Lower leg skin (tissue), 4 donors: ENCODE measurements at regions of chrX and their contacts with region 1.

Region 1: DNA sequence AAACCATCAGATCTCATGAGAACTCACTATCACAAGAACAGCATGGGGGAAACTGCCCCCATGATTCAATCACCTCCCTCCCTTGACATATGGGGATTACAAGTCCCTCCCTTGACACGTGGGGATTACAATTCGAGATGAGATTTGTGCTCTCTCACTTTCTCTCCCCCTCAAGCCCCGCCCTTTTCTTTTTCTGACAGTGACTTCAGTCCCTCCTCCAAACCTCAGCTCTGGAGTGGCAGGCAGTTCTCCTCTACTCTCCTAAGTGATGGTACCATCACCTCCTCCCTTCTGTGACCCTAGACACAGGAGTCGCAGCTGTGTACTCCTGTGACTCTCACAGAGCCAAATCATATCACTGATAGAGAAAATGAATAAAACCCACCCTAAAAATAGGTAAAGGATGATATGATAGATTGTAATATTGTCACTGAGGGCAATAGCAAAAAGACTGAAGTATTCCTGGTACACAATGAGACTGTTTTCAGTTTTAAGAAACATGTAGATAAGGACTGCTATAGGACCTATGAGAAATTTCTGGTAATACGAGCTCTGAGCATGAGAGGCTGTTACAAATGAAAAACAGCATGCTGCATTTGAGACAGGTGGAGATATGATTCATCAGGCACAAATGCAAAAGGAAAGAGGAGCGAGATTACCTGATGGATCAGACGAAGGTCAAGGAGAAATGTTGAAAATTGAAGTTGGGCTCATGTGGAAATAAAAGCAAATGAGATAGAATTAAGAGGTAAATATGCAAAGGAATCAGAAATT is 101.2 kb upstream of the CBLL2 start:
- DNase-seq: no peak
- H3K4me3 ChIP-seq: no peak overlapping the region
- CTCF ChIP-seq: no peak
- POLR2A ChIP-seq: no peak

Region 2: GRCh38 chrX:21408307-21408706 is 763.2 kb before region 1 on chrX:
- intact Hi-C with region 1: no loop called
- DNase-seq: no peak
- H3K4me3 ChIP-seq: no peak overlapping the region
- CTCF ChIP-seq: no peak
- POLR2A ChIP-seq: no peak

Region 3: DNA sequence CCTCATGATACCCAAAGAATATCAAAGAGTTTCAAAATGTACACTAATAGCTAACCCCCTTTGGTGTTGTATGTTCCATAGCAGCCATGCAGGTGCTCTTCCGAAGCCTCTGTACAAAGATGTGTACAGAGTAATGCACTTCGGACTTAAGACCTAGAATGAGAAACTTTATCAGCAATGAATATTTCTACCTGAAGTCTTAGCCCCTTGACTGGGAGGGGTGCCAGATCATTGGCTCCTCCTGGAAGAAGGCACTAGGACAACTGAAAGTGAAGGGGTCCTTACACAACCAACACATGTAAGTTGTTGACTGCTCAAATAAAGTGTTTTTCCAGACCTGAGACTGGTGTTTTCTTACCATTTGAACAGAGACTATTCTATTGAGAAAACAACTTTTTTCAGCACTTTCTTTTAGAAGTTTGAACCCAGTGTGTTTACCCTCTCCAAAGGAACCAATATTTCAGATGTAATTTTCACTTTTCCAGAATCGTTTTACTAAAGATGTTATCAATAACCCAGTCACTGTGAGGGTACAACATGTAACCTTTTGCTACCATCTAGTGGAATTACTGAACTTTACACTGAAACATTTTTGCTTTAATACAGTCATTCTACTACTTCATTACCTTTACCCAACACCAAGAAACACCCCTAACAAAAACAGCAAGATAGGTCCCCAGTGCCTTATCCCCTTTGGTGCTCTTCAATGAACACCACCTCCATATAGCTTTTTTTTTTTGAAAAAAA is 1462.5 kb after region 1 on chrX:
- intact Hi-C with region 1: loop called (anchors 5 kb)
- DNase-seq: no peak
- H3K4me3 ChIP-seq: no peak overlapping the region
- CTCF ChIP-seq: no peak
- POLR2A ChIP-seq: no peak